ENCODE measurements at regions of chr2 and their contacts with region 1.

Region 1: GRCh38 chr2:25664183-25664964 is 9.0 kb downstream of the DTNB start:
- H3K4me3 ChIP-seq: peak overlapping the region; percentile 2
- H3K27ac ChIP-seq: no peak overlapping the region
- H3K4me1 ChIP-seq: peaks cover 17% of the 10 kb centered on the region
- CTCF ChIP-seq: peak; percentile 67; the same call in 1 of the 2 replicates

Region 2: DNA sequence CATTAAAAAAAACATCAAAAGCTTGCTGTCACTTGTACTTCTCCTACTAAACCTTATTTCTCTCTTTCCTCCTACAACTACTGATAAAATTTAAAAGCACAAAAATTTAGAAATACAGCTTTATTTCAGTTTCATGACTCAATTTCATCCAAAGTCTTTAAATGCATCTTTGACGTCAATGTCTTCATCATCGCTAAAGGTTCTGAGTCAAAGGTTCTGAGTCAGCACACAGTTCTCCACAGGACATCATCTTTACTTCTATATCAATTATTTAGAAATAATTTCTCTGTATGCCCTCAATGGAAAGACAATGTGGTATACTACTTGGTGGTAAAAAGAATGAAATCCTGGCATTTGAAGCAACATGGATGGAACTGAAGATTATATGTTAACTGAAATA is 158.7 kb before region 1 on chr2:
- CTCF ChIA-PET with region 1: no interaction called
- POLR2A ChIA-PET with region 1: no interaction called
- H3K4me3 ChIP-seq: no peak overlapping the region
- H3K27ac ChIP-seq: no peak overlapping the region
- H3K4me1 ChIP-seq: no peaks in the 10 kb centered on the region
- CTCF ChIP-seq: no peak

Region 3: DNA sequence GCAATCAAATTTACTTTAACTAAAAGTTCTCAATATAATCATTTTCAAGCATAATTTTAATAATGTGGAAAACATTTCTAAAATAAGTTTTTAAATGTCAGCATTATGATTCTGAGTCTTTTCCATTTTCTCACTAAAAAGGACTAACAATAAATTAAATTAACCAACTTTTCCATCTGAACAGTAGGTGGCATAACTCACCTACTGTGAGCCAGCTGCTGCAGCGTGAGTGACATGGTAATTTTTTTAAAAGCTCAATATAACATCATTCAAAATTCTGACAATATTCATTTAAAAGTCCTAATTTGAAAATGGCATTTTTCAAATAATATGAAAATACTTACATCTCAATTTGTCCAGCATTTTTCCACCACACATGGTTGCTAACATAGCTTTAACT is 57.5 kb before region 1 on chr2:
- CTCF ChIA-PET with region 1: interaction called, 175 read pairs
- POLR2A ChIA-PET with region 1: no interaction called
- H3K4me3 ChIP-seq: no peak overlapping the region
- H3K27ac ChIP-seq: no peak overlapping the region
- H3K4me1 ChIP-seq: 0 out of 2 replicates have a peak, but pooled peaks cover 3% of the 10 kb centered on the region
- CTCF ChIP-seq: no peak; the same call in 1 of the 2 replicates

Region 4: DNA sequence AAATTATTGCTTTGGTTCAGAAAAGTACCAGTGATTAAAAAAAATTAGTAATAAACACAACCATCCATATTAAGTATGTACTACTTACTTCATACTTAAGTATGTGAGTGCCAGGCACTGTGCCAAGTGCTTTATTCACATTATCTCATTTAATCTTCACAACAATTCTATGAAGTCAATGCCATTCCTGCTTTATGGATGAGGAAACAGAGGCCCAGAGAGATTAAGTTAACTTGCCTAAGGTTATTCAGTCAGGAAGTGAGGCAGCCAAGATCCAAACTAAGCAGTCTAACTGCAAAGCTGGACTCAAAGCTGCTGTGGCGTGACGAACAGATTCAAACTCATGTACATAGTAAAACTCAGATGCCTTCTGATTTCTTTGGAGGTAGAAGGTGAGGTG is 13.3 kb before region 1 on chr2:
- CTCF ChIA-PET with region 1: interaction called, 23 read pairs
- POLR2A ChIA-PET with region 1: no interaction called
- H3K4me3 ChIP-seq: no peak overlapping the region
- H3K27ac ChIP-seq: no peak overlapping the region
- H3K4me1 ChIP-seq: no peaks in the 10 kb centered on the region
- CTCF ChIP-seq: no peak

Region 5: GRCh38 chr2:25690058-25690457 is 25.7 kb after region 1 on chr2:
- CTCF ChIA-PET with region 1: interaction called, 12 read pairs
- POLR2A ChIA-PET with region 1: no interaction called
- H3K4me3 ChIP-seq: no peak overlapping the region
- H3K27ac ChIP-seq: no peak overlapping the region
- H3K4me1 ChIP-seq: no peaks in the 10 kb centered on the region
- CTCF ChIP-seq: no peak

Region 6: DNA sequence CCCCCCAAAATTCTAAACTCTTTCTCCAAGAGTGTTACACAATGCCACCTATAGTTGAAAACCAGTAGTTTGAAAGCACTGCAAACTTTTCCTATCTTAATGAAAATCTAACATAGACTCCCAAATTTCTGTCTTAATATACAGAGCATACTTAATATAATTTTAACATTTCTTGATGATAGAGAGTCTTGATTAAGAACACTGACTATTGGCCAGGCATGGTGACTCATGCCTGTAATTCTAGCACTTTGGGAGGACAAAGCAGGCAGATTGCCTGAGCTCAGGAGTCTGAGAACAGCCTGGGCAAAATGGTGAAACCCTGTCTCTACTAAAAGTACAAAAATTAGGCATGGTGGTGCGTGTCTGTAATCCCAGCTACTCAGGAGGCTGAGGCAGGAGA is 179.7 kb after region 1 on chr2:
- CTCF ChIA-PET with region 1: no interaction called
- POLR2A ChIA-PET with region 1: no interaction called
- H3K4me3 ChIP-seq: no peak overlapping the region
- H3K27ac ChIP-seq: no peak overlapping the region
- H3K4me1 ChIP-seq: no peaks in the 10 kb centered on the region
- CTCF ChIP-seq: no peak

Region 7: DNA sequence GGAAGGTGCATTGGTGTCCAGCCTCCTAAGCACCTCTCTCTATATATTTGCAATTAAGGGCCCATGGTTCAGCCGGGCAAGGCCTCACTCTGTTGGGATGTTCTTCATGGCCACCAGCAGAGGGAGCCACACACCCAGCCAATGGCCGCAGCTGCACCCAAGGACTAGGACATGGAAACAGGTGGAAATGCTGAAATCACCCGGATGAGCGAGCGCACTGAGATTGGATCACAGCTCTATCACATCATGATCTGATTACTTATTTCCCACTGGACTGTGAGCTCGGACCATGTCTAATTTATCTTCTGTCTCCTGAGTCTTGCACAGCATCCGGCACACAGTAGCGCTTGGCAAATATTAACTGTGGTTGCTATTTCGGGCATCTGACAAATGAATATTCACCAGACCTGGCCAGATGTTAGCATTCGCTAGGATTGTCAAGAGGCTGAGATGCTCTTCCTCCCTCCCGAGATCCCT is 286.7 kb after region 1 on chr2:
- CTCF ChIA-PET with region 1: no interaction called
- POLR2A ChIA-PET with region 1: no interaction called
- H3K4me3 ChIP-seq: no peak overlapping the region
- H3K27ac ChIP-seq: no peak overlapping the region
- H3K4me1 ChIP-seq: no peaks in the 10 kb centered on the region
- CTCF ChIP-seq: peak; percentile 80